Gastrocnemius medialis (tissue), 4 donors: ENCODE measurements at regions of chr16 and their contacts with region 1.

Region 1: GRCh38 chr16:66406534-66407221 is 20.4 kb upstream of the BEAN1 start:
- DNase-seq: peak; percentile 54 to 67
- ATAC-seq: peak; percentile 86
- H3K4me3 ChIP-seq: peak overlapping the region; percentile 50 to 62 (median 53)
- H3K27ac ChIP-seq: peak overlapping the region in 1 of 4 donors; percentile 7
- H3K4me1 ChIP-seq: peaks cover 3 to 6% of the 10 kb centered on the region in 2 donors
- H3K27me3 ChIP-seq: no peaks in the 10 kb centered on the region
- CTCF ChIP-seq: peak; percentile 80 to 94 (median 89)
- POLR2A ChIP-seq: no peak

Region 2: GRCh38 chr16:66539623-66540469 is 133.2 kb after region 1 on chr16:
- in situ Hi-C with region 1: no loop called
- intact Hi-C with region 1: no loop called
- DNase-seq: no peak
- ATAC-seq: no peak
- H3K4me3 ChIP-seq: no peak overlapping the region
- H3K27ac ChIP-seq: no peak overlapping the region
- H3K4me1 ChIP-seq: peaks cover 7 to 8% of the 10 kb centered on the region in 2 donors
- H3K27me3 ChIP-seq: no peaks in the 10 kb centered on the region
- CTCF ChIP-seq: no peak
- POLR2A ChIP-seq: no peak

Region 3: DNA sequence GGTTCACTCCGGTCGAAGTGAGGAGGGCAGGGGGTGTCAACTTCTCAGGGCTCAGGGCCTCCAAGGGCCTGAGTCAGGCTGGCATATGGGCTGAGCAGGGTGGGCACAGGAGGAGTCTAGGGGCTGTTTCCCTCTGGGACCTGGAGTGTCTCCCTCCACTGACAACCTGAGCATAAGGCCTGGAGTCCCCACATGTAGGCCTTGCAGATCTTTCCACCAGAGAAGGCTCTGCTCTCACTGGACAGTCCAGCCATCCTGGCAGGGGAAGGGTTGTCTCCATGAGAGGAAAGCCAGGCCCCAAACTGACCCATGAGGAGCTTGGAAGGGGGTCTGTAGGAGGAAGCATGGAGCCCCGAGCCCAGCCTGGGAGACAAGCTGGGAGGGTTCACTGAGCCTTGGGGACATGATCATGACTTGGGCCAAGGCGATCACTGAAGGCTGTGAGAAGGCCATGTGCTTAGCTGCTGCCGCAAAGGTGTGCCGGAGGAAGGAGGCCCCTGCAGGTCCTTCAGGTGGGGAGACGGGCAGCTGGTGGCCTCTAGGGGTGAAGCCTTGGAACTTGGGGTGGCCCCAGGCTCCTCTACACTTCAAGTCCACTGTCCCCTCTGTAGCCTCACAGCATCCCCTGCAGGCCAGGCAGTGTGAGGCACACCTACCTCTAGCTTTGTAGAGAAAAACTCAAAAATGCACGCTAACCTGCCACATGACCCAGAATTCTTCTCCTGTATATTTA is 182.5 kb after region 1 on chr16:
- in situ Hi-C with region 1: loop called in 2 of 4 experiments (anchors 10 kb)
- intact Hi-C with region 1: no loop called
- DNase-seq: no peak
- ATAC-seq: no peak
- H3K4me3 ChIP-seq: no peak overlapping the region
- H3K27ac ChIP-seq: no peak overlapping the region
- H3K4me1 ChIP-seq: no peaks in the 10 kb centered on the region
- H3K27me3 ChIP-seq: no peaks in the 10 kb centered on the region
- CTCF ChIP-seq: peak in 4 of 5 experiments; percentile 33 to 51 (median 44)
- POLR2A ChIP-seq: no peak

Region 4: GRCh38 chr16:66859397-66860068 is 452.9 kb after region 1 on chr16:
- in situ Hi-C with region 1: loop called (anchors 10 to 25 kb)
- intact Hi-C with region 1: no loop called
- DNase-seq: no peak
- ATAC-seq: no peak
- H3K4me3 ChIP-seq: no peak overlapping the region
- H3K27ac ChIP-seq: no peak overlapping the region
- H3K4me1 ChIP-seq: no peaks in the 10 kb centered on the region
- H3K27me3 ChIP-seq: no peaks in the 10 kb centered on the region
- CTCF ChIP-seq: no peak
- POLR2A ChIP-seq: no peak